Activated CD4-positive, alpha-beta T cell treated with anti-CD3 and anti-CD28 coated beads for 36 hours (primary cell): ENCODE measurements at regions of chr9 and their contacts with region 1.

Region 1: GRCh38 chr9:127785023-127785932 is 556 bp upstream of the CDK9 start:
- DNase-seq: peak; percentile 93
- ATAC-seq: peak; percentile 34
- H3K4me3 Mint-ChIP-seq: peak overlapping the region; percentile 97
- H3K27ac Mint-ChIP-seq: peak overlapping the region; percentile 97
- H3K4me1 Mint-ChIP-seq: peaks cover 74% of the 10 kb centered on the region
- H3K27me3 Mint-ChIP-seq: no peaks in the 10 kb centered on the region

Region 2: DNA sequence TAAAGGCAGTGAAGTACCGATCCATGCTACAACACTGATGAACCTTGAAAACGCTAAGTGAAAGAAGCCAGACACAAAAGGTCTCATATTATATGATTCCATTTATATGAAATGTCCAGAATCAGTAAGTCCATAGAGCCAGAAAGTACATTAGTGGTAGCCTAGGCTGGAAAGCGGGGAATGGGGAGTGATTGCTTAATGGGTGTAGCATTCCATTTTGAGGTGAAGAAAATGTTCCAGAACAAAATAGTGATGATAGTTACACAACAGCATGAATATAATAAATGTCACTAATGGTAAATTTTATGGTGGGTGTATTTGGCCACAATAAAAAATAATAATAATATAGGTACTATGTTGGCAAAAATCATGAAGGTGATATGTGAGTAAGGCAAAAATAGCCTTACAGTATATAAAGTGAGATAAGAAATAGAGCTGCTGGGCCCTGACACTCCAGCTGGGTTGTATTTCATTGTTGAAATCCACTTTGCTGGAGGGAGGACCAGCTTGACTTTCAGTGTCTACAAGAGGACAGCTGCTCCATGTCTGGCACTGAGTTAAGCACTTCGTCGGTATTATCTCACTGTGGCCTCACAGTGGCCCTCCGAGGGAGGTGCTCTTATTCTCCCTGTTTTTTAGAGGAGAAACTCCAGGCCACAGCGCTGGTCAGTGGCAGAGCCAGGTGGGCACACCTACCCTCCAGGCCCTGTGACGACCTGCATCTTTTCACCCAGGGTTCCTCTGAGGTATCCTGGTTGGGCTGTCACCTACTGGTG is 640.4 kb before region 1 on chr9:
- CTCF ChIA-PET with region 1: no interaction called
- POLR2A ChIA-PET with region 1: no interaction called
- intact Hi-C with region 1: no loop called
- DNase-seq: no peak
- ATAC-seq: no peak
- H3K4me3 Mint-ChIP-seq: no peak overlapping the region
- H3K27ac Mint-ChIP-seq: no peak overlapping the region
- H3K4me1 Mint-ChIP-seq: no peaks in the 10 kb centered on the region
- H3K27me3 Mint-ChIP-seq: no peaks in the 10 kb centered on the region

Region 3: DNA sequence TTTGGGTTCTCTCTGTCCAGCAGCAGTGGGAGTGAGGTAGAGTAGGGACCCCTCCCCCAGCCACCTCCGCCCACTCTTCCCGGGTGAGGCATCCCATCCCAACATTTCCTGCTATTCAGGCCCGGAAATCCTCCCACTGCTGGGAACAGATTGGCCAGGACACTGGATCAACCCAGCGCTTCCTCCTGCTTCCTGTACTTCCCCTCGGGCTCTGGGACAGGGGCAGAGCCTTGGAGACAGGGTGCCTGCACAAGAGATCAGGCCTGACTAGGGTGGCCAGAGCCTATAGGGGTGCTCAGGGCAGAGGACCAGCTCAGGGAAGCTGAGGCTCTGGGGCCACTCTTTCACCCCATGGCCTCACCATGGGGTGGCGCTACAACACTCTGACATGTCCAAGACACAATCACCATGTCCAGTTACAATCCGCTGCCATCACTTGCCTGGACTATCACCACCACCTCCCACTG is 21.3 kb before region 1 on chr9:
- CTCF ChIA-PET with region 1: interaction called, 5 read pairs
- POLR2A ChIA-PET with region 1: no interaction called
- intact Hi-C with region 1: loop called in 1 of 2 experiments (anchors 1 kb)
- DNase-seq: peak; percentile 69
- ATAC-seq: peak; percentile 57
- H3K4me3 Mint-ChIP-seq: no peak overlapping the region
- H3K27ac Mint-ChIP-seq: no peak overlapping the region
- H3K4me1 Mint-ChIP-seq: peaks cover 42% of the 10 kb centered on the region
- H3K27me3 Mint-ChIP-seq: no peaks in the 10 kb centered on the region

Region 4: DNA sequence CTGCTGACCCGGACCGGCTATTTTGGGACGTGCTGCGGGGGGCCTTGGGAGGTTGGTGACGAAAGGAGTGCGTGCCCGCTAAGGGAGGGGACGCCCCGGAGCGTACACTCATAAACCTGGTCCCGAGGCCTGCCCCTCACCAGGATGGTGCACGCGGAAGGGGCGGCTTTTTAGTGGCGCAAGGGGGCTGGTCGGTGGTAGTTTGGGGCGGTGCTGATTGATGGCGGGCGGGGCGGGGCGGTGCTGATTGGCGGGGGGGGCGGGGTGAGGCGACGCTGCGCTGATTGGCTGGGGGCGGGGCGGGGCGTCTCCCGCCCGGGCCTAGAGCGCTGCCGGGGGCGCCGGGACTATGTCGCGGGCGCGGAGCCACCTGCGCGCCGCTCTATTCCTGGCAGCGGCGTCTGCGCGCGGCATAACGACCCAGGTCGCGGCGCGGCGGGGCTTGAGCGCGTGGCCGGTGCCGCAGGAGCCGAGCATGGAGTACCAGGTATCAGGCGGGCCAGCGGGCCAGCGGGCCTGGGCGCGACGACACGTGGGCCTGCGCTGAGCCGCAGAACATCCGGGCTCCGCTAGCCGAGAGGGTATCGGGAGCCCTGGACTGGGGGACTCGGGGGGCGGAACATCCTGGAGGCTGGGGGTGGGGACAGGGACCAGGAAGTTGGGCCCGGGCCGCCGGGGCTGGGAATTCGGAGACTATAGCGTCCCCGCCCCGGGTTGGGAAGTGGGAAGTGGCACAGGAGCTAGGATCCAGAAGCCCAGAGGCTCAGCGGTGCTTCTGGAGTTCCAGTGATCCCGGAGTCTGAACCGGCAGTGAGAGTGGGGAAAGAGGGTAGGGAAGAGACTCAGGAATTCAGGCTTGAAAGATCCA is 17.5 kb after region 1 on chr9 and contains the start of gene FPGS:
- CTCF ChIA-PET with region 1: interaction called, 6 read pairs
- POLR2A ChIA-PET with region 1: no interaction called
- intact Hi-C with region 1: loop called (anchors 1 kb)
- DNase-seq: peak; percentile 93
- ATAC-seq: peak; percentile 86
- H3K4me3 Mint-ChIP-seq: peak within 1 kb of the TSS; percentile 98
- H3K27ac Mint-ChIP-seq: peak within 1 kb of the TSS; percentile 95
- H3K4me1 Mint-ChIP-seq: peaks cover 26% of the 10 kb centered on the region
- H3K27me3 Mint-ChIP-seq: no peaks in the 10 kb centered on the region
- total RNA-seq, gene FPGS: 71.9 to 80.4 TPM

Region 5: GRCh38 chr9:127869310-127870152 is 84.3 kb after region 1 on chr9:
- CTCF ChIA-PET with region 1: interaction called, 17 read pairs
- POLR2A ChIA-PET with region 1: no interaction called
- intact Hi-C with region 1: loop called (anchors 1 to 5 kb)
- DNase-seq: peak; percentile 91
- ATAC-seq: peak; percentile 75
- H3K4me3 Mint-ChIP-seq: no peak overlapping the region
- H3K27ac Mint-ChIP-seq: no peak overlapping the region
- H3K4me1 Mint-ChIP-seq: peaks cover 16% of the 10 kb centered on the region
- H3K27me3 Mint-ChIP-seq: no peaks in the 10 kb centered on the region